ENCODE measurements at regions of chr1 and their contacts with region 1.

Region 1: DNA sequence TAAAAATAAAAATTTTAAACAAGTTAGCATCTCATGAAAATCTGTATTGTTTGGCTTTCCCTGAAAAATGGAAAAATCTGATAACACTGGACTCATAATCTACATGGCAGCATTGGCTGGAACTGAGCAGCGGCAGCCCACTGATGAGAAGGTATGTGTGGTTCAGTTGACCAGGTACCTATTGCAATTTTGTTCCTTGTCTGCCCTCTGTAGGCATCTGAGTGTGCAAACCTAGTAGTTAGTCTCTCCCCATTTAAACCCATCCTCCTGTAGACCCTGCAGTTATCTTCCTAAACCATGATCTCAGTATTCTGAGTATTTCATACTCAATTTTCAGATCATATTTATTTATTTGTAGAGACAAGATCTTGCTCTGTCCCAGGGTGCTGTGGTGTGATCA is 59.4 kb upstream of the SERBP1 start:
- DNase-seq: peak; percentile 7
- H3K4me3 ChIP-seq: no peak overlapping the region
- H3K27ac ChIP-seq: no peak overlapping the region
- H3K4me1 ChIP-seq: no peaks in the 10 kb centered on the region
- H3K27me3 ChIP-seq: peaks cover 6% of the 10 kb centered on the region; the same call in 1 of the 2 replicates

Region 2: DNA sequence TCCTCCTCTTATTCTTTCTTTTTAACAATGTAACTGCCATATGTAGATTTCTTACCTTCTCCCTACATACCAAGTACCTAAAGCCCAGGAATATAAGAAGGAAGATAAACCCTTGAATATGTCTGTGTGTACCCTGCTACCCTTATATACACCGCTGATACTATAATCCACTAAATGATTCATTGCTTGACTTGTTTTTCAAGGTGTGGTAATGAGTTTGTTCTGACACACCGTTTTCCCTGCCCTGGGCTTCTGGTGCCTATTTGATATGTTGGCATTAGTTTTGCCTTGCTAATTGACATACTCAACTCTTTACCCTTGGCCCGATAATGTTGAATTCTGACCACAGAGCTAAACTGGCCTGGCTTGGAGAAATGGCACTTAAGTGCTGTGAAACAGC is 259.1 kb before region 1 on chr1:
- in situ Hi-C with region 1: loop called (anchors 10 kb)
- DNase-seq: no peak
- H3K4me3 ChIP-seq: no peak overlapping the region
- H3K27ac ChIP-seq: no peak overlapping the region
- H3K4me1 ChIP-seq: no peaks in the 10 kb centered on the region
- H3K27me3 ChIP-seq: peaks cover 9% of the 10 kb centered on the region; the same call in 1 of the 2 replicates